Activated CD4-positive, alpha-beta memory T cell treated with anti-CD3 and anti-CD28 coated beads for 36 hours (primary cell): ENCODE measurements at regions of chr14 and their contacts with region 1.

Region 1: GRCh38 chr14:98173305-98173704 is 1098.7 kb downstream of the BCL11B start:
- DNase-seq: peak; percentile 67
- H3K4me3 Mint-ChIP-seq: peak overlapping the region; percentile 62
- H3K27ac Mint-ChIP-seq: peak overlapping the region; percentile 98
- H3K4me1 Mint-ChIP-seq: peaks cover 98% of the 10 kb centered on the region
- H3K27me3 Mint-ChIP-seq: no peaks in the 10 kb centered on the region

Region 2: GRCh38 chr14:97994020-97994531 is 179.2 kb before region 1 on chr14:
- CTCF ChIA-PET with region 1: no interaction called
- POLR2A ChIA-PET with region 1: interaction called, 3 read pairs
- intact Hi-C with region 1: loop called (anchors 5 kb)
- DNase-seq: peak; percentile 59
- H3K4me3 Mint-ChIP-seq: peak overlapping the region; percentile 34
- H3K27ac Mint-ChIP-seq: peak overlapping the region; percentile 94
- H3K4me1 Mint-ChIP-seq: peaks cover 55% of the 10 kb centered on the region
- H3K27me3 Mint-ChIP-seq: no peaks in the 10 kb centered on the region

Region 3: GRCh38 chr14:98138666-98139065 is 34.6 kb before region 1 on chr14:
- CTCF ChIA-PET with region 1: interaction called, 32 read pairs
- POLR2A ChIA-PET with region 1: interaction called, 16 read pairs
- intact Hi-C with region 1: loop called (anchors 1 kb)
- DNase-seq: peak; percentile 73
- H3K4me3 Mint-ChIP-seq: peak overlapping the region; percentile 42
- H3K27ac Mint-ChIP-seq: peak overlapping the region; percentile 80
- H3K4me1 Mint-ChIP-seq: peaks cover 76% of the 10 kb centered on the region
- H3K27me3 Mint-ChIP-seq: no peaks in the 10 kb centered on the region

Region 4: DNA sequence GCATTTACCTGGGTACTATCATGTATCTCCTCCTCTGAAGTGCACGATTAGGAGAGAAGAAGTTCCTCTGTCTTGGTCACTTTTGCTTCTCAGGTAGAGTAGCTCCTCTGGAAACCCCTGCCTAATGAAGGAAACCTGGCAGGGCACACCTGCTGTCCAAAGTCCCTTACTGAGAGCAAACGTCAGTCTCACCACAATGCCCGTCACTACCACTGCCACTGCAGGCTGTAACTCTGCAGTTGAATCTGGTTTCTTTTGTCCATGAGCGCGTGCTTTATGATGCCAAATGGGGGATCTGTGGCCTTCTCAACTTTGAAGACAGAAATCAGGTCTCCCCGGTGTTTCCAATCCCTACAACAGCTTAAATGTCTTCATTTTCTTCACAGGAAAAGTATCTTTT is 30.1 kb after region 1 on chr14:
- CTCF ChIA-PET with region 1: no interaction called
- POLR2A ChIA-PET with region 1: no interaction called
- intact Hi-C with region 1: no loop called
- DNase-seq: no peak
- H3K4me3 Mint-ChIP-seq: peak overlapping the region; percentile 24
- H3K27ac Mint-ChIP-seq: no peak overlapping the region
- H3K4me1 Mint-ChIP-seq: peaks cover 65% of the 10 kb centered on the region
- H3K27me3 Mint-ChIP-seq: no peaks in the 10 kb centered on the region

Region 5: GRCh38 chr14:98227000-98227726 is 53.9 kb after region 1 on chr14:
- CTCF ChIA-PET with region 1: interaction called, 4 read pairs
- POLR2A ChIA-PET with region 1: interaction called, 16 read pairs
- intact Hi-C with region 1: loop called (anchors 1 kb)
- DNase-seq: peak; percentile 78
- H3K4me3 Mint-ChIP-seq: peak overlapping the region; percentile 11
- H3K27ac Mint-ChIP-seq: peak overlapping the region; percentile 91
- H3K4me1 Mint-ChIP-seq: peaks cover 86% of the 10 kb centered on the region
- H3K27me3 Mint-ChIP-seq: no peaks in the 10 kb centered on the region